CD8-positive, alpha-beta T cell (primary cell): ENCODE measurements at regions of chr2 and their contacts with region 1.

Region 1: DNA sequence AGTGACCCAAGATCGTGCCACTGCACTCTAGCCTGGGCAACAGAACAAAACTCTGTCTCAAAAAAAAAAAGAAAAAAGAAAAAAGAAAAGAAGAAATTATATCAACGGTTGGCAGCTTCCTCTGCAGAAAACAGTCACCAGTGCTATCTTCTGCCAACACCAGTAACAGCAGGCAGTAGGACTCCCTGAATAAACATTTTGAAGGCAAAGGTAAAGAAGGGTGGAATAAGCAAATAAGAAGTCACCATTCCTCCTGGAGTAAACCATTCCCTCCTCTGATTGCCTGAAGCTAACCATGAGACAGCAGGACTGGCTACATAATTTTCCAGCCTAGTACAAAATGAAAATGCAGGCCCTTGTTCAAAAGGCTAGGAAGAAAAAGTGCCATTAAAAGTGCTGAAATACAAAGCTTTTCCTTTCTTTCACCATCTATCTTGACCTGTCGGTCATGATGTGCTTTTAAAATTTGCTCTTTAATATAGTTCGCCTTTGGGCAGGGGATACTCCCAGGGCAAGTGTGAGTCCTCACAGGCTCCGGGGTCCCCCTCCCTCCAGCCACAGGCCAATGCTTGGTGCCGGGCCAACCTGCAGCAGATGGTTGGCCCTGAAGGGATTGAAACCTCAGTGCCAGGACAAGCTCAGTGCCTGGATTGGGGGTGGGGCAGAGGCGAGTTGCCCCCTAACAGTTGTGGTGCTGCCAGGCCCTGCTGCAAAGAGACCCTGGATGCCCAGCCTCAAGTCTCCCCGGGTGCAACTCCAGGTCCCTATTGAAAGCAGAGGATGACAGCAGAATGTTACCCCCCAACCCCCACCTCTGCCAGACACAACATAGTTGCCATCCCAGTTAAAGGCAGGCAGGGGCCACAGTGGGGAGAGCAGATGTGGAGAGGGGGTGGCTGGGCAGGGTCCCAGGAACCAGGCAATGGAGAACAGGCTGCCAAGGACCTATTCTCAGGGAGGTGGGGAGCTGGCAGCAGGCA is 9.3 kb upstream of the RNF103 start:
- DNase-seq: no peak
- ATAC-seq: no peak
- H3K4me3 ChIP-seq: no peak overlapping the region
- H3K4me3 Mint-ChIP-seq: no peak overlapping the region
- H3K27ac ChIP-seq: no peak overlapping the region
- H3K27ac Mint-ChIP-seq: no peak overlapping the region
- H3K4me1 ChIP-seq: no peaks in the 10 kb centered on the region
- H3K4me1 Mint-ChIP-seq: no peaks in the 10 kb centered on the region
- H3K27me3 ChIP-seq: no peaks in the 10 kb centered on the region
- H3K27me3 Mint-ChIP-seq: no peaks in the 10 kb centered on the region
- CTCF ChIP-seq: no peak

Region 2: DNA sequence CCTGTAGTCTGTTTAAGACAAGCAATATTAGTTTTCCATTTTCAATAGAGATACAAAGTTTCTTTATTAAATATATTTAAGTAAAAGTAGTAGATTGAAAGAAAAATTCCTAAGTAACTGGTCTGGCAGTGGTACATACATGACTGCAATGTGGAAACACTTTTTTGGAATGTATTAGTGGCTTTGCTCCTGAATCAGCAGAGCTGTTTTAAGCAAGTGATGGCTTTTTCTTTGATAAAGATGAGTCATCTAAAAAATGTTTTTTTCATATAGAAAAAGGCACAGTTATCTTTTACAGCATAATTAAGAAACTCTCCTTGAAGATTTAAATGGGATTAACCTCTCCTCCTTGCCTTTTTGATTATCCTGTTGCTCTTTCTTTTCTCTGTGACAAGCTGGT is 156.9 kb before region 1 on chr2:
- CTCF ChIA-PET with region 1: no interaction called
- POLR2A ChIA-PET with region 1: no interaction called
- intact Hi-C with region 1: no loop called
- DNase-seq: no peak
- ATAC-seq: no peak
- H3K4me3 ChIP-seq: no peak overlapping the region
- H3K4me3 Mint-ChIP-seq: no peak overlapping the region
- H3K27ac ChIP-seq: no peak overlapping the region
- H3K27ac Mint-ChIP-seq: peak overlapping the region; percentile 0
- H3K4me1 ChIP-seq: no peaks in the 10 kb centered on the region
- H3K4me1 Mint-ChIP-seq: peaks cover 29% of the 10 kb centered on the region
- H3K27me3 ChIP-seq: no peaks in the 10 kb centered on the region
- H3K27me3 Mint-ChIP-seq: no peaks in the 10 kb centered on the region
- CTCF ChIP-seq: no peak

Region 3: DNA sequence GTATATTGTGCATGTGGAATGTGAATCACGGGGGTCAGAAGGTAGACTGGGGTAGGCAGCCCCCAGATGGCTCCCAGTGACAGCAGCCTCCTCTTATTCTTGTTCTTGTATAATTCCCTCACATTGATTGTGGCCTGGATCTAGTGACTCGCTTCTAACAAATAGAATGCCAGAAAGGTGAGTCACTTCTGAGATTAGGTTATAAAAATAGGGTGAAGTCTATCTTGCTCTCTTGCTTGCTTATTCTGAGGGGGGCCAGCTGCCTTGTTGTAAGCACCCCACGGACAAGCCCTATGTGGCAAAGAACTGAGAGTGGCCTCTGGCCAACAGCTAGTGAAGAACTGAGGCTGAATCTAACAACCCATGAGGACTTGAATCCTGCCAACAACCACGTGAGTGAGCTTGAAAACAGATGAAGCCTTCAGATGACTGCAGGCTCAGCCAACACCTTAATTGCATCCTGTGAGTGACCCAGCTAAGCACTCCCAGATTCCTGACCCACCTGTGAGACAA is 71.6 kb after region 1 on chr2:
- CTCF ChIA-PET with region 1: no interaction called
- POLR2A ChIA-PET with region 1: no interaction called
- intact Hi-C with region 1: loop called in 1 of 2 experiments (anchors 5 kb)
- DNase-seq: no peak
- ATAC-seq: no peak
- H3K4me3 ChIP-seq: no peak overlapping the region
- H3K4me3 Mint-ChIP-seq: no peak overlapping the region
- H3K27ac ChIP-seq: no peak overlapping the region
- H3K27ac Mint-ChIP-seq: no peak overlapping the region
- H3K4me1 ChIP-seq: no peaks in the 10 kb centered on the region
- H3K4me1 Mint-ChIP-seq: no peaks in the 10 kb centered on the region
- H3K27me3 ChIP-seq: no peaks in the 10 kb centered on the region
- H3K27me3 Mint-ChIP-seq: peaks cover 2% of the 10 kb centered on the region
- CTCF ChIP-seq: no peak